ENCODE measurements at regions of chr17 and their contacts with region 1.

Region 1: GRCh38 chr17:17859909-17860765 is 23.4 kb upstream of the SREBF1 start:
- DNase-seq: peak; percentile 91

Region 2: GRCh38 chr17:17672453-17673368 is 187.4 kb before region 1 on chr17:
- intact Hi-C with region 1: no loop called
- DNase-seq: no peak

Region 3: GRCh38 chr17:17819561-17819995 is 40.6 kb before region 1 on chr17:
- intact Hi-C with region 1: loop called in 1 of 2 experiments (anchors 2 kb)
- DNase-seq: peak; percentile 93

Region 4: DNA sequence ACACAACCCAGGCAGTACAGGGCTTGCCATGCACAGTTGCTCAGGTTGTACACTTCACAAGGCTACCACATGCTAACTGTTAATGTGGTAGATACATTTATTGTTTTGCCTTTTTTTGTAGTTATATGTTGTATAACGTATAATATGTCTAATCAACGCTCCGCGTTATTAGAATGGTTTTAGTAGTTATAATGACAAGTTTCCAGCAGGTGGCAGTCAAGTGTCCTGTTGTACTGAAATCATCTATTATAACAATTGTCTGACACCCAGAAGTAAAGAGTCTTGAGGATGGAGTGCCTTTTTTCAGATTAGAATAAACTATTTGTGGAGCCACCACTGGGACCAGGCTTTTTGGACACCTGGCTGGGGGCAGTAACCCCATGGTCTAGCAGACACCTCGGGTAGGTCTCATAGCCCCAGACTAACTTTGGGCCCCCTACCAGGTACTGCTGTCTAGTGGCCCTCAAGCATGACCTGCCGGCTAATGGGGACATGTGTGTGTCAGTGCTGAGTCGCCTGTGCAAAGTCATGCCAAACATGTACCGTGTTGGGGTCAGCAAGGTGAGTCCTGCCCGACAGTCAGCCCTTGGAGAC is 281.2 kb after region 1 on chr17:
- intact Hi-C with region 1: no loop called
- DNase-seq: no peak

Measured in posterior vena cava (tissue), 2 donors.